WTC11 (cell line): ENCODE measurements at regions of chr3 and their contacts with region 1.

Region 1: GRCh38 chr3:197029511-197030167 is at the start of gene MELTF:
- DNase-seq: peak; percentile 70
- ATAC-seq: peak; percentile 82
- H3K4me3 Mint-ChIP-seq: peak within 1 kb of the TSS; percentile 75
- H3K27ac Mint-ChIP-seq: no peak within 1 kb of the TSS
- H3K4me1 Mint-ChIP-seq: peaks cover 10% of the 10 kb centered on the region; the same call in 1 of the 2 replicates
- H3K27me3 Mint-ChIP-seq: peaks cover 20% of the 10 kb centered on the region
- CTCF ChIP-seq: peak; percentile 88
- total RNA-seq, gene MELTF: 7.3 to 9.5 TPM (median 8.7 TPM) in 3 replicates

Region 2: GRCh38 chr3:196948442-196949284 is 81.0 kb before region 1 on chr3:
- CTCF ChIA-PET with region 1: interaction called, 10 read pairs
- POLR2A ChIA-PET with region 1: no interaction called
- DNase-seq: peak; percentile 68
- ATAC-seq: peak; percentile 89
- H3K4me3 Mint-ChIP-seq: no peak overlapping the region
- H3K27ac Mint-ChIP-seq: no peak overlapping the region
- H3K4me1 Mint-ChIP-seq: peaks cover 17% of the 10 kb centered on the region
- H3K27me3 Mint-ChIP-seq: no peaks in the 10 kb centered on the region
- CTCF ChIP-seq: no peak

Region 3: DNA sequence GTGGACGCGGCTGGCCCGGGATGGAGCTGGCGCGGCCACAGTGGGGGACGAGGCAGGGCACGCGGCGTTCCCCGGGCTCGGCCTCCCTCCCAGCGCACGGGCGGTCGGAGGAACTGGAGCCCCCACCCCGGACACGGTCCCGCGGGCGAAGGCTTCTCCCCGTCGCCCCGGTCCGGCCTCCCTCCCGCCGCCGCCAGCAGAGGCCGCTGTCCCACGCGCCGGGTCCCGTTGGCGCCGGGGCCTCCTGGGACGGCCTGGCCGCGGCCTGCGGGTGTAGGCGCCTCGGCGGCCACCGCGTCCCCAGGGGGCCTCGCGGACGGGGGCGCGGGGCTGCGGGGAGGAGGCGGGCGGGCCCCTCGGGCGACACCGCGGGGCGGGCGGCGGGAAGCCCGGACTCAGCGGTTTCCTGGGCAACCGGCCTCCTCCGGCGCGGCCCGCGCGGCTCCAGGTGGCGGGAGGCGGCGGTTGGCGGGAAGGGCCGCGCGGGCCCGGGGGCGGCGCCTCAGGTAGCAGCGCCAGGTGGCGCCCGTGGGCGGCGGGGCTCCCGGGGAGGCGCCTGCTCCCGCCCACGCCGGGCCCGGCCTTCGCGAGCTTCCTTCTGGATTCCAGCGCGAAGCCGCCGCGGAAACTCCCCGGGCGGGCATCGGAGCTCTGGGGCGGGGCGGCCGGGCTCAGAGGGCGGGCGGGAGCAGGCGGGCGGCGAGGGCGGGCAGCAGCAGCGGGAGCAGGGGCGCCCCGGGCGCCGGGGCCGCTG is 26.8 kb before region 1 on chr3:
- CTCF ChIA-PET with region 1: interaction called, 48 read pairs
- POLR2A ChIA-PET with region 1: interaction called, 4 read pairs
- DNase-seq: peak; percentile 59
- ATAC-seq: peak; percentile 52
- H3K4me3 Mint-ChIP-seq: no peak overlapping the region
- H3K27ac Mint-ChIP-seq: no peak overlapping the region
- H3K4me1 Mint-ChIP-seq: peaks cover 15% of the 10 kb centered on the region
- H3K27me3 Mint-ChIP-seq: peaks cover 29% of the 10 kb centered on the region
- CTCF ChIP-seq: peak; percentile 46

Region 4: GRCh38 chr3:197050511-197050910 is 20.9 kb after region 1 on chr3:
- CTCF ChIA-PET with region 1: no interaction called
- POLR2A ChIA-PET with region 1: no interaction called
- DNase-seq: no peak
- ATAC-seq: no peak
- H3K4me3 Mint-ChIP-seq: no peak overlapping the region
- H3K27ac Mint-ChIP-seq: no peak overlapping the region
- H3K4me1 Mint-ChIP-seq: no peaks in the 10 kb centered on the region
- H3K27me3 Mint-ChIP-seq: no peaks in the 10 kb centered on the region
- CTCF ChIP-seq: no peak